Activated B cell treated with CpG ODN at 0.5 μM for 24 hours (primary cell): ENCODE measurements at regions of chrX and their contacts with region 1.

Region 1: GRCh38 chrX:152958524-152959465 is 35.1 kb downstream of the PNMA5 start:
- DNase-seq: peak; percentile 79
- ATAC-seq: peak; percentile 95
- H3K4me3 Mint-ChIP-seq: peak overlapping the region; percentile 71
- H3K27ac Mint-ChIP-seq: peak overlapping the region; percentile 83
- H3K4me1 Mint-ChIP-seq: peaks cover 9% of the 10 kb centered on the region
- H3K27me3 Mint-ChIP-seq: no peaks in the 10 kb centered on the region
- CTCF ChIP-seq: no peak

Region 2: DNA sequence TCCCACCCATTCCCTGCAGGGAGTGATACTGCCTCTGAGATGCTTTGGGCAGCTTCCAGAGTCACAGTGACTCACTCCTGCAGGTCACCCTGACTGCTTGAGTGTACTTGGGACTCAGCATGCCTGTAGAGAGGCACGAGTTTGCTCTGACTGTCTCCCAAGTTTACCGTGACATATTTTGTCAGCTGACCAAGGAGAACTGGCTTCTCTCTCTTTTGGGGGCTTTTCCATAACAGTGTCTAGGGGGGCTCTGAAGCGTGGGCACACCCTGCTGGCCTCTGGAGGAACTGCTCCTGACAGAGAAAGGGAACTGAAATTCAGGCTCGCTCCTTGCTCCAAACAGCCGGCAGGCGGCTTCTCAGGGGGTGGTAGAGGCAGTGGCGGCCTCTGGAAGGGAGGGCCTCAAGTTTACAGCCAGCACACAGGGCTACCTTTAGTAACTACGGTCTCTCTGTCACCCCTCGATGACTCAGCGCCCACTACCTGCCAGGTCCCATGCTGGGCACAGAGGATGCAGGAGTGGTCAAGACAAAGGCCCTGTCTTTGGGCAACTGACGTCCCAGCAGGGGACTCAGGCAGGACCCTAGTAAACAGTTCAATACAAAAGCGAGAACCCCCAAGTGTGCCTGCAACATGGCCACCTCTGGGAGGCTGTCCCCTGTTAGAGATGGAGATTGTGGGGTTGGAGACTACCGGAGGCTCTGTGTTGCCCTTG is 43.1 kb before region 1 on chrX:
- CTCF ChIA-PET with region 1: no interaction called
- POLR2A ChIA-PET with region 1: no interaction called
- intact Hi-C with region 1: no loop called
- DNase-seq: peak; percentile 24
- ATAC-seq: peak; percentile 88
- H3K4me3 Mint-ChIP-seq: no peak overlapping the region
- H3K27ac Mint-ChIP-seq: no peak overlapping the region
- H3K4me1 Mint-ChIP-seq: peaks cover 3% of the 10 kb centered on the region
- H3K27me3 Mint-ChIP-seq: no peaks in the 10 kb centered on the region
- CTCF ChIP-seq: no peak

Region 3: GRCh38 chrX:153032397-153033118 is 73.8 kb after region 1 on chrX:
- CTCF ChIA-PET with region 1: interaction called, 3 read pairs
- POLR2A ChIA-PET with region 1: interaction called, 5 read pairs
- intact Hi-C with region 1: loop called (anchors 1 kb)
- DNase-seq: peak; percentile 70
- ATAC-seq: peak; percentile 87
- H3K4me3 Mint-ChIP-seq: peak overlapping the region; percentile 89
- H3K27ac Mint-ChIP-seq: peak overlapping the region; percentile 92
- H3K4me1 Mint-ChIP-seq: peaks cover 2% of the 10 kb centered on the region
- H3K27me3 Mint-ChIP-seq: no peaks in the 10 kb centered on the region
- CTCF ChIP-seq: no peak

Region 4: GRCh38 chrX:153507484-153508178 is 548.8 kb after region 1 on chrX:
- CTCF ChIA-PET with region 1: interaction called, 4 read pairs
- POLR2A ChIA-PET with region 1: no interaction called
- intact Hi-C with region 1: loop called (anchors 1 kb)
- DNase-seq: peak; percentile 68
- ATAC-seq: peak; percentile 99
- H3K4me3 Mint-ChIP-seq: no peak overlapping the region
- H3K27ac Mint-ChIP-seq: no peak overlapping the region
- H3K4me1 Mint-ChIP-seq: no peaks in the 10 kb centered on the region
- H3K27me3 Mint-ChIP-seq: no peaks in the 10 kb centered on the region
- CTCF ChIP-seq: no peak

Region 5: GRCh38 chrX:153612413-153612812 is 653.6 kb after region 1 on chrX:
- CTCF ChIA-PET with region 1: no interaction called
- POLR2A ChIA-PET with region 1: no interaction called
- intact Hi-C with region 1: no loop called
- DNase-seq: no peak
- ATAC-seq: no peak
- H3K4me3 Mint-ChIP-seq: no peak overlapping the region
- H3K27ac Mint-ChIP-seq: no peak overlapping the region
- H3K4me1 Mint-ChIP-seq: peaks cover 9% of the 10 kb centered on the region
- H3K27me3 Mint-ChIP-seq: peaks cover 3% of the 10 kb centered on the region
- CTCF ChIP-seq: no peak

Region 6: GRCh38 chrX:153662266-153662665 is 703.5 kb after region 1 on chrX:
- CTCF ChIA-PET with region 1: no interaction called
- POLR2A ChIA-PET with region 1: no interaction called
- intact Hi-C with region 1: loop called (anchors 1 kb)
- DNase-seq: peak; percentile 44
- ATAC-seq: no peak
- H3K4me3 Mint-ChIP-seq: peak overlapping the region; percentile 55
- H3K27ac Mint-ChIP-seq: no peak overlapping the region
- H3K4me1 Mint-ChIP-seq: peaks cover 2% of the 10 kb centered on the region
- H3K27me3 Mint-ChIP-seq: peaks cover 11% of the 10 kb centered on the region
- CTCF ChIP-seq: no peak

Region 7: DNA sequence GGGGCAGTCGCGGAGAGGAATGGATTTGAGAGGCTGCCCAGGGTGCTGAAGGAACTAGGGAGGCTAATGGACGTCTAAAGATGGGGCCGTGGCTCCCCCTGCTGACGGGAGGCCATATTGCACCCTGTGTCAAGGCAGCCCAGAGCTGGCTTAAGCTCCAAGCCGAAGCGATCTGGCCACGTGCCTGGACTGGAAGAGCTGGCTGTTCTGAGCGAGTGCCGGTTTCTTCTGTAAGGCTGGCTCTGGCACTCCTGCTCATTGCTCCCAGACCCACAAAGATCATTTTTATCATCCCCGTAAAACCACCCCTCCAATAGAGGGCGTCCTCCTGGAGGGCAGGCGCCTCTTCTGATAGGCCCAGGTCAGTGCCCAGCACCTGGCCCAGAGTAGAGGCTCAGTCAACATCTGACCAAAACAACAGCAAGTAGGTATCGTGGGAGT is 709.2 kb after region 1 on chrX:
- CTCF ChIA-PET with region 1: interaction called, 3 read pairs
- POLR2A ChIA-PET with region 1: no interaction called
- intact Hi-C with region 1: loop called (anchors 1 kb)
- DNase-seq: peak; percentile 66
- ATAC-seq: peak; percentile 90
- H3K4me3 Mint-ChIP-seq: peak overlapping the region; percentile 68
- H3K27ac Mint-ChIP-seq: no peak overlapping the region
- H3K4me1 Mint-ChIP-seq: peaks cover 5% of the 10 kb centered on the region
- H3K27me3 Mint-ChIP-seq: peaks cover 7% of the 10 kb centered on the region
- CTCF ChIP-seq: no peak

Region 8: DNA sequence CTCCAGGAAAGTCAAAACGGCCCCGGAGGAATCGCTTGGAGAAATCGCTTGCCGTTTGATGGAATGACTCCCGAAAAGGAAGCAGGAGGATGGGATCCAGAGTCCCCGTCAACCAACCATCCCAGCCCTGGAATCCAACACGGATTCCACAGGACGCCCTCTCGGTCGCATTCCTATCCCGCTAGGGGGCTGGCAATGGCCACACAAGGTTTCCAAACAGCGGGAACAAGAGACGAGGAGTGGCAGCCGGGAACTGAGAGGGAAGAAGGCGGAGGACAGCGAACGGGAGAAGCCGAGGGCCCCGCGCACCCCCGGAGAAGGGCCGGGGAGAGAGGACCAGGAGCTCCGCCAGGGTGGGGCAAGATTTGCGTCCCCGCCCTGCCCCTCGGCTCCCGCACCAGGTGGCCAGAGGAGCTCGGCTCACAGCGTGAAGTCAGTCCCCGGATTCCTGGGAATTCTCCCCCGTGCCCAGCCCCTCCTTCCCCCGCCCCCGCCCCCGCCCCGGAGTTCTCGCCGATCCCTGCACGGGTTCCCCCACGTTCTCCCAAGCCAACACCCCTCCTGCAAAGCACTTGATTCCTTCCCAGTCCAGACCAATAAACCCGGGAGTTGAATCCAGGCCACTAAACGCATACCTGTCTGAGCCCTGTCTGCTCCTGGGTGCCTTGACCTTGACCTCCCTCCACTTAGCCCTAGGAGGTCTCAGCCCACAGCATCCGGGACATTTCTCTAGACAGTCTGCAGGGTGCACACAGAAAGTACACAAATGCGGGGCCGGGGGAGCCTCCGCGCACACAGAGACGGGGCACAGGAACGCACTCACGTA is 870.1 kb after region 1 on chrX:
- CTCF ChIA-PET with region 1: no interaction called
- POLR2A ChIA-PET with region 1: no interaction called
- intact Hi-C with region 1: no loop called
- DNase-seq: no peak
- ATAC-seq: peak; percentile 14
- H3K4me3 Mint-ChIP-seq: peak overlapping the region; percentile 41
- H3K27ac Mint-ChIP-seq: no peak overlapping the region
- H3K4me1 Mint-ChIP-seq: peaks cover 7% of the 10 kb centered on the region
- H3K27me3 Mint-ChIP-seq: peaks cover 17% of the 10 kb centered on the region
- CTCF ChIP-seq: no peak

Region 9: GRCh38 chrX:153963546-153963945 is 1004.8 kb after region 1 on chrX:
- CTCF ChIA-PET with region 1: no interaction called
- POLR2A ChIA-PET with region 1: no interaction called
- intact Hi-C with region 1: loop called (anchors 5 kb)
- DNase-seq: no peak
- ATAC-seq: no peak
- H3K4me3 Mint-ChIP-seq: no peak overlapping the region
- H3K27ac Mint-ChIP-seq: no peak overlapping the region
- H3K4me1 Mint-ChIP-seq: peaks cover 41% of the 10 kb centered on the region
- H3K27me3 Mint-ChIP-seq: no peaks in the 10 kb centered on the region
- CTCF ChIP-seq: no peak

Region 10: GRCh38 chrX:154051201-154051810 is 1092.5 kb after region 1 on chrX:
- CTCF ChIA-PET with region 1: no interaction called
- POLR2A ChIA-PET with region 1: no interaction called
- intact Hi-C with region 1: loop called (anchors 10 kb)
- DNase-seq: peak; percentile 24
- ATAC-seq: peak; percentile 73
- H3K4me3 Mint-ChIP-seq: no peak overlapping the region
- H3K27ac Mint-ChIP-seq: no peak overlapping the region
- H3K4me1 Mint-ChIP-seq: peaks cover 10% of the 10 kb centered on the region
- H3K27me3 Mint-ChIP-seq: no peaks in the 10 kb centered on the region
- CTCF ChIP-seq: no peak